PC-3 (cell line): ENCODE measurements at regions of chr1 and their contacts with region 1.

Region 1: DNA sequence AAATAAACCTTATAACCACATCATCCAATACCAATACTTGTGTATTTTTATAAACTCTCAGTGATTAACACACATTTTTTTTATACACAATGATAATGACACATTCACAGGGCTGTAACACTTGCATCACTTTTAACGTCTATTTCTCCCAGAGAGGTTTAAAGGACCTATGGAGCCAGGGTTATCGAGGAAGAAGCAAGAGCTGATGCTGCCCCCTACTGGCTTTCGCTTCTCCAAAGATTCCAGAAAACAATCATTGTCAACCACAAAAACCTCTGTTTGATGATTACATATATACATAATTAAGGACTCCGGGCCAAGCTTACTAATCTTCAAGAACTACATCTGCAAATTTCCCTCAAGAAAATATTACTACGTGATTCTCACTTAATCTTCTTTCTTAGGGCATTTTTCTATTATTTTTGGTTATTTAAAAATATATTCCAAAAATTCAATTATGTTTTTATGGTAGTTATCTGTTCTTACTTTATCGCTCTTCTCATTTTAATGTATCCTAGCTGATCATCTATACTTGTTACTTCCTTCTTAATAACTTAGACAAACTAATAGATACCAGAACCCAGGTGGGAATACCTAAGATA is 214.5 kb downstream of the VAV3 start:
- DNase-seq: peak; percentile 85
- ATAC-seq: peak; percentile 68
- H3K4me3 ChIP-seq: no peak overlapping the region
- H3K27ac ChIP-seq: no peak overlapping the region
- H3K4me1 ChIP-seq: no peaks in the 10 kb centered on the region
- H3K27me3 ChIP-seq: no peaks in the 10 kb centered on the region
- CTCF ChIP-seq: peak; percentile 90

Region 2: DNA sequence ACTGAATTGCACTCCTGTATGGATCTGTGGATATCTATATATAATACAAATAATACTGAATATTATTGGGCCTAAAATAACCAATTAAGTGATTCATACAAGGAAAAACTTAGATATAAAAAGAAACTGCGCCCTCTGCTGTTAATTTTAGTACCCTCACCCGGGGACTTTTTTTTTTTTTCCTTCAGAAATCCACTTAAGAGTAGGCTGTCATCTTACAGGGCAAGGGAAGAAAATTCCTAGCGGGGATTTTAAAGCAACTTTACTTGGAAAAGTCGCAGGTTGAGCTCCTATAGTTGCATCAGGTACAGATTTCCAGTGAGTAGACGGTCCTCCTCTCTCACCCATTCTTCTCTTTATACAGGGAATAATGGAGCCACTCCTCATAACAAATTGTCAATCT is 608.3 kb before region 1 on chr1:
- CTCF ChIA-PET with region 1: no interaction called
- POLR2A ChIA-PET with region 1: no interaction called
- intact Hi-C with region 1: loop called (anchors 5 kb)
- DNase-seq: peak; percentile 82
- ATAC-seq: no peak; the same call in 1 of the 2 replicates
- H3K4me3 ChIP-seq: peak overlapping the region; percentile 80
- H3K27ac ChIP-seq: no peak overlapping the region
- H3K4me1 ChIP-seq: peaks cover 36% of the 10 kb centered on the region
- H3K27me3 ChIP-seq: no peaks in the 10 kb centered on the region
- CTCF ChIP-seq: peak; percentile 70

Region 3: DNA sequence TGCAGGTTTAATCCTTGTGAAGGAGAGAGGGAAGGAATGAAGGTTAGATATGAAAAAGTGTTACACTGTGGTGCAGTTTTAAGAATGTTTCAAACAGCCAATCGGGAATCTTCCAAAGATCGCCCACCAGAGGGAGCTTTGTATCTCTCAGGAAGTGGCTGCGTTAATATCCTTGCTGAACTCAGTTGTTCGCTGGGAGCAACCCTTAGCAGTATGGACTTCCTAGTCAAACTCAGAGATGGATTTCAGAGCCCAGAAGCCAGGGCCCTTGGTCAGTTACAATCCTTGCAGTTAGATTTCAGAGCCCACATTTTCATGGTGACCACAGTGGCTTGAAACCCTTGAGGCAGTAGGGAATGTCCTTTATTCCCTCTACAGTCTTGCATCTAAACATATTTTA is 473.4 kb before region 1 on chr1:
- CTCF ChIA-PET with region 1: no interaction called
- POLR2A ChIA-PET with region 1: no interaction called
- intact Hi-C with region 1: loop called (anchors 2 kb)
- DNase-seq: peak; percentile 65
- ATAC-seq: peak; percentile 37; the same call in 1 of the 2 replicates
- H3K4me3 ChIP-seq: no peak overlapping the region
- H3K27ac ChIP-seq: no peak overlapping the region
- H3K4me1 ChIP-seq: no peaks in the 10 kb centered on the region
- H3K27me3 ChIP-seq: no peaks in the 10 kb centered on the region
- CTCF ChIP-seq: peak; percentile 71

Region 4: DNA sequence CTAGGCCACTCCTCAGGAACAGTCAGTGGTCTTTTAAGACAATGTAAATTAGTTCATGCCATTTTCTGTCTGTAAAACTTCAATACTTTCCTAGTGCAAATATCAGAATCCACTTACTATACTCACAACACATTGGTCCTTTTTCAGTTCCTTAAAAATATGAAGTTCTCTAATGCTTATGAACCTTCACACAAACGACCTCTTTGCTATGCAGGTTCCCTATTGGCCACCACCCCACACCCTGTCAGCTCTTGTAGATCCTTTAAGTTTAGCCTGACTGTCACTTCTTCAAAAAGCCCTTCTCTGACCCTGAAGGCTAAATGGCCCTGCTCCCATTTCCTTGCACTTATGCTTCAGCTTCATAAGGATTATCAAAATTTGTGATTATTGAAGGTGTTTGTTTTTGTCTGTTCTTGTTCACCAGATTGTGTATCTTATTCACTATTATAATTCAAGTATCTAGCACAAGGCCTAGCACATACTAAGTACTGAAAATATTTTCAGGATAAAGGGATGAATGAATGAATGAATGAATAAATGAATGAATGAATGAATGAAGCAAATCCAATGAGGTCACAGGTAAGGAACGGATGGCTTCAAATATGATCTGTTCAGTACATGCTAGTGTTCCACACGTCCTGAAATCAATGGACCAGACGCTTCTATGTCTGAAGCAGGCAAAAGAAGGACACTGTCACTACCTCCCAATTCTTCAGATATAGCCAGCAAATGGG is 159.4 kb before region 1 on chr1:
- CTCF ChIA-PET with region 1: no interaction called
- POLR2A ChIA-PET with region 1: no interaction called
- intact Hi-C with region 1: loop called (anchors 5 kb)
- DNase-seq: no peak
- ATAC-seq: no peak
- H3K4me3 ChIP-seq: no peak overlapping the region
- H3K27ac ChIP-seq: no peak overlapping the region
- H3K4me1 ChIP-seq: peaks cover 34% of the 10 kb centered on the region
- H3K27me3 ChIP-seq: no peaks in the 10 kb centered on the region
- CTCF ChIP-seq: no peak

Region 5: GRCh38 chr1:107688354-107688753 is 62.1 kb before region 1 on chr1:
- CTCF ChIA-PET with region 1: no interaction called
- POLR2A ChIA-PET with region 1: no interaction called
- intact Hi-C with region 1: loop called (anchors 2 kb)
- DNase-seq: peak; percentile 94
- ATAC-seq: peak; percentile 85
- H3K4me3 ChIP-seq: peak overlapping the region; percentile 22; the same call in 1 of the 2 replicates
- H3K27ac ChIP-seq: peak overlapping the region; percentile 88
- H3K4me1 ChIP-seq: peaks cover 63% of the 10 kb centered on the region
- H3K27me3 ChIP-seq: no peaks in the 10 kb centered on the region
- CTCF ChIP-seq: no peak